ENCODE measurements at regions of chr12 and their contacts with region 1.

Region 1: DNA sequence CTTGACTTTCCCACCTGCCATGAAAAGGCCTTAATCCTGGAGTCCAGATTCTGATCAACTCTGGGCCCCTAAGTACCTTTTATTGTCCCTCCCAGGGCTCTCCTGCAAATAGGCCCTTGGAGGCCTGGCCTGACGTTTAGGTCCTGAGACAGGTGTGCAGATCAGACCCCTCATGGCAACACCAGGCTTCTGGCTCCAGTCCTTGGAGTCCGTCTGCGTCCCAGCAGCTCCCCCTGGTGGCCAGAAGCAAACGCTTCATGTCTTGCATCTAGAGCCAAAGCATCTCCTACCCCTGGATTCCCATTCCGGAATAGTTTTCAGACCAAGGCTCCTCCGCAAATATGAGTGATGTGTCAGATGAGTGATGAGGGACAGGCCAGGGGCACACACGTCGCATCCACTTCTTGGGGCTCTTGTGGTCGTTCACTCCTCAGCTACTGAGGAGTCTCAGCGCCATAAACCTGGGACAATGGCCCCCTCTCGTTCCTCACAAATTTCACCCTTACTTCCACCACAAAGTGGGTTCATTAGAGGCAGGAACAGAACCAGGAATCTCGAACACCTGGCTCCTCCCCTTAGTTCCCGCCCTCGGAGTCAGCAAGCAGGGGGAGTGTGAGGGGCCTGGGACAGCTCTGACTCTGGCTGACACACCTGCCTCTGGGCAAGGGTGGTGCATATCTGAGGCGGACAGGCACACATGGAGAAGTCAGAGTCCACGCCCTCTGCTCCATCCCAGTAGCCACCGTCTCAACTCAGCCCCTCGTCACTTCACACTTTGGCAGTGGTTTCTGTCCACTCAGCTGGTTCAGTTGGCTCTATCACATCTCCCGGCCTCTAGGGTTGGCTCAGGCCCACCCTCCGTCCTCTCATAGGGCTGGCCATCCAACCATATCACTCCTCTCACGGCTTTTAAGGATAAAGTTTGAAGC is 77.9 kb upstream of the PWP1 start:
- DNase-seq: peak; percentile 89
- ATAC-seq: peak; percentile 60
- H3K4me3 Mint-ChIP-seq: no peak overlapping the region
- H3K27ac Mint-ChIP-seq: no peak overlapping the region
- H3K4me1 Mint-ChIP-seq: no peaks in the 10 kb centered on the region
- H3K27me3 Mint-ChIP-seq: no peaks in the 10 kb centered on the region

Region 2: DNA sequence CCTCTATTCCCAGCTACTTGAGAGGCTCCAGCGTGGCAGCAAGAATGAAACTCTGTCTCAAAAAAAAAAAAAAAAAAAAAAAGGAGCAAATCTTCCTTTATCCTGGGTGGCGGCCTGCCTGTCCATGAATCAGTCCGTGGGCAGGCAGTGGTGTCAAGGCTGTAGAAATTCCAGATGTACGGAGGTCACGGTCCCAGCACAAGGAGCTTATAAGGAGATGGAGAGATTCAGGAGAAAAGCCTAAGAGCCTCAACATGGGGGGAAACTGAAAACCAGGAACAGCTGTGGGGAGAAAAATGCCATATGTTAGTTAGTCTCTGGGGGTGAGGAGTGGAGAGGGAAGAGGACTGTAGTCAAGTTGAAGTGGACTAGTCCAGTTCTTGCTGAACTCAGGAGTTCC is 383.9 kb before region 1 on chr12:
- CTCF ChIA-PET with region 1: no interaction called
- POLR2A ChIA-PET with region 1: no interaction called
- intact Hi-C with region 1: loop called in 1 of 2 experiments (anchors 5 kb)
- DNase-seq: no peak
- ATAC-seq: no peak
- H3K4me3 Mint-ChIP-seq: no peak overlapping the region
- H3K27ac Mint-ChIP-seq: no peak overlapping the region
- H3K4me1 Mint-ChIP-seq: no peaks in the 10 kb centered on the region
- H3K27me3 Mint-ChIP-seq: peaks cover 16% of the 10 kb centered on the region

Region 3: GRCh38 chr12:107402041-107403022 is 205.4 kb before region 1 on chr12:
- CTCF ChIA-PET with region 1: interaction called, 13 read pairs
- POLR2A ChIA-PET with region 1: no interaction called
- intact Hi-C with region 1: loop called (anchors 1 to 2 kb)
- DNase-seq: peak; percentile 80
- ATAC-seq: peak; percentile 88
- H3K4me3 Mint-ChIP-seq: no peak overlapping the region
- H3K27ac Mint-ChIP-seq: no peak overlapping the region
- H3K4me1 Mint-ChIP-seq: peaks cover 12% of the 10 kb centered on the region
- H3K27me3 Mint-ChIP-seq: no peaks in the 10 kb centered on the region

Region 4: GRCh38 chr12:107564946-107565345 is 42.8 kb before region 1 on chr12:
- CTCF ChIA-PET with region 1: interaction called, 10 read pairs
- POLR2A ChIA-PET with region 1: no interaction called
- intact Hi-C with region 1: no loop called
- DNase-seq: peak; percentile 20
- ATAC-seq: peak; percentile 55
- H3K4me3 Mint-ChIP-seq: no peak overlapping the region
- H3K27ac Mint-ChIP-seq: no peak overlapping the region
- H3K4me1 Mint-ChIP-seq: peaks cover 7% of the 10 kb centered on the region
- H3K27me3 Mint-ChIP-seq: no peaks in the 10 kb centered on the region